H1 (cell line): ENCODE measurements at regions of chr11 and their contacts with region 1.

Region 1: GRCh38 chr11:57800444-57801182 is 39.0 kb downstream of the CTNND1 start:
- DNase-seq: no peak
- H3K4me3 ChIP-seq: no peak overlapping the region
- H3K27ac ChIP-seq: no peak overlapping the region
- H3K4me1 ChIP-seq: peaks cover 0 to 2% (median 0%) of the 10 kb centered on the region in 4 experiments; a peak in 2 of 7 replicates
- H3K27me3 ChIP-seq: no peaks in the 10 kb centered on the region
- CTCF ChIP-seq: peak in 2 of 3 experiments; percentile 66 to 83; a peak in 3 of 4 replicates
- EP300 ChIP-seq: no peak
- POLR2A ChIP-seq: no peak
- RAD21 ChIP-seq: peak; percentile 95 to 97

Region 2: DNA sequence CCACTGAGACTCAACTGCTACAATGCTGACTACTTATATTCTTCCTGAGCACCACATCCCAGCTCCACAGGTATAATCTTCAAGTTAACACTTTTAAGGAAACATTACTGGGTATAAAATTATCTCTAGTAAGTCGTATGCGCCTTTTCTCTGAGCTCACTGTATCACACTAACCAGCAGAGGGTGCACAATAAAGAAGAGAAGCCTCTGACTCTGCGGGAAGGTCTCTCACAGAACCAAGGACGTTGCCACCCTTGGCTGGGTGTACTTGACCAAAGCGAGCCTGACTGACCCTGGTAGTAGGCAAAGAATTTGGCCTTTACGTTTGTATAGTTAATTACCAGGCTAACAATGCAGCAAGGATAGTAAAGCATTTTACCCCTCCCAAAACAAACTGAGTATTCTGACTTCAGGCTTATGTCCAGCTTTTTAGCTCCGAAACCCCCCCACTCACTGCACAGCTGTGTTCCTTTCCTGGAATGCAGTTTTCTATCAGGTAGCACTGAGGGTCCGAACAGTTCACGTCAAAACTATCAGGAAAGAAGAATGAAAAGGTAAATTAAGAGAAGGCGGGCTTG is 48.8 kb before region 1 on chr11 and contains the start of gene BTBD18:
- CTCF ChIA-PET with region 1: interaction called, 182 read pairs
- POLR2A ChIA-PET with region 1: interaction called, 20 read pairs
- DNase-seq: peak in 1 of 2 experiments; percentile 54
- H3K4me3 ChIP-seq: no peak within 1 kb of the TSS
- H3K27ac ChIP-seq: no peak within 1 kb of the TSS; the same call in 1 of the 2 replicates
- H3K4me1 ChIP-seq: no peaks in the 10 kb centered on the region; a peak in 1 of 7 replicates
- H3K27me3 ChIP-seq: no peaks in the 10 kb centered on the region
- CTCF ChIP-seq: peak in 2 of 3 experiments; percentile 58 to 61; a peak in 3 of 4 replicates
- EP300 ChIP-seq: no peak
- POLR2A ChIP-seq: no peak
- RAD21 ChIP-seq: peak; percentile 62 to 78
- total RNA-seq, gene BTBD18: not detected in 2 replicates

Region 3: GRCh38 chr11:57761301-57762234 is 39.0 kb before region 1 on chr11 and contains the start of gene CTNND1:
- CTCF ChIA-PET with region 1: interaction called, 119 read pairs
- POLR2A ChIA-PET with region 1: interaction called, 48 read pairs
- DNase-seq: peak; percentile 71 to 84
- H3K4me3 ChIP-seq: peak within 1 kb of the TSS; percentile 88 to 97 (median 91)
- H3K27ac ChIP-seq: peak within 1 kb of the TSS; percentile 93
- H3K4me1 ChIP-seq: peaks cover 0 to 10% (median 2%) of the 10 kb centered on the region in 4 experiments; a peak in 1 of 7 replicates
- H3K27me3 ChIP-seq: no peaks in the 10 kb centered on the region
- CTCF ChIP-seq: no peak
- EP300 ChIP-seq: no peak; a peak in 1 of 3 replicates
- POLR2A ChIP-seq: peak; percentile 84 to 91
- RAD21 ChIP-seq: peak; percentile 3; a peak in 1 of 4 replicates
- total RNA-seq, gene CTNND1: 164 and 167 TPM in 2 replicates

Region 4: GRCh38 chr11:57940044-57940756 is 139.6 kb after region 1 on chr11:
- CTCF ChIA-PET with region 1: no interaction called
- POLR2A ChIA-PET with region 1: no interaction called
- DNase-seq: no peak
- H3K4me3 ChIP-seq: no peak overlapping the region
- H3K27ac ChIP-seq: no peak overlapping the region
- H3K4me1 ChIP-seq: no peaks in the 10 kb centered on the region
- H3K27me3 ChIP-seq: no peaks in the 10 kb centered on the region; a peak in 1 of 7 replicates
- CTCF ChIP-seq: no peak
- EP300 ChIP-seq: no peak
- POLR2A ChIP-seq: no peak
- RAD21 ChIP-seq: no peak